HCT116 (cell line): ENCODE measurements at regions of chr1 and their contacts with region 1.

Region 1: GRCh38 chr1:209576798-209577197 is 6.7 kb upstream of the CAMK1G start:
- DNase-seq: peak; percentile 73
- ATAC-seq: peak; percentile 100
- H3K4me3 ChIP-seq: no peak overlapping the region
- H3K27ac ChIP-seq: no peak overlapping the region
- H3K4me1 ChIP-seq: peaks cover 0 to 9% of the 10 kb centered on the region in 2 experiments; a peak in 1 of 4 replicates
- H3K27me3 ChIP-seq: 0 out of 2 replicates have a peak, but pooled peaks cover 16% of the 10 kb centered on the region
- CTCF ChIP-seq: peak; percentile 92 to 96 (median 93)
- POLR2A ChIP-seq: no peak
- RAD21 ChIP-seq: peak; percentile 95

Region 2: DNA sequence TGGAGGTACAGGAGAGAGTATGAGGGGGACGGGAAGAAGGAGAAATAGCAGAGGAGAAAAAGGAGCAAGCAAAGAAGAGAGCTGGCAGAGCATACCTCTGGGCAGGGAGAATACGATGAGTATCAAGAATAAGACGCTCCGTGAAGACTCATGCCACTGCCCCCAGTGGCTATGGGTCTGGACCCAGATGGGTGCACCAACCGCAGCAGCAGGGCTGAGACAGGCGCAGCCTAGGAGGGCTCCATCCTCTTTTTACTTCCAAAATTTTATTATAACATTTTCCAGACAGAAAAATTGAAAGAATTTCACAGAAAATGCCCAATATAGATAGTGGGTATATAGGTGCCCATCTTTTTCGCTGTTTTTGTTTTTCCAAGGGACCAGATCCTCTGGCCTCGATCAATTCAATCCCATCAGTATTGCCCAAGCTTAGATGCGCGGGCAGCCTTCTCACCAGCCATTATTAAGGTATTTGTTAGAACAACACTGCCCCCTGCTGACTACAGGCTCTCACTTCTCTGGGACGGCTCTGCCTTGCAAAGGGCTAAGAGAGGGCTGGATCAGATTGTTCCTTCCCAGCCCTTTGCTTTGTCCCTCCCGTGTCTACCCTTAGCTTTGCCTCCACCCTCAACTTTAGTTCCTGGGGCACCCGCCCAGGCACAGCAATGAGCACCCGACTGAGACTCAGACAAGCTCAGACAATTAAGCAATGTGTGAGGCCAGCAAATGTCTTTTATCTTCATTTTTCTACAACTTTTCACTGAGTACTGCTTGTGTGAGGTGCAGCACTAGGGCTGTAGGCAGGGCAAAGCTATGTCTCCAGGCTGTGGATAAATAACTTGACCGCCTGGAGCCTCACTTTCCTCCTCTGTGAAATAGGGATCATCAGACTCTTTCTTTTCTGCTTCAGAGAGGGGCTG is 10.8 kb before region 1 on chr1:
- CTCF ChIA-PET with region 1: interaction called, 22 read pairs
- POLR2A ChIA-PET with region 1: no interaction called
- RAD21 ChIA-PET with region 1: no interaction called
- intact Hi-C with region 1: no loop called
- DNase-seq: peak; percentile 78
- ATAC-seq: peak; percentile 96
- H3K4me3 ChIP-seq: no peak overlapping the region
- H3K27ac ChIP-seq: no peak overlapping the region
- H3K4me1 ChIP-seq: peaks cover 0 to 6% of the 10 kb centered on the region in 2 experiments; a peak in 1 of 4 replicates
- H3K27me3 ChIP-seq: peaks cover 10% of the 10 kb centered on the region; the same call in 1 of the 2 replicates
- CTCF ChIP-seq: peak; percentile 74 to 84 (median 83); a peak in 5 of 6 replicates
- POLR2A ChIP-seq: no peak
- RAD21 ChIP-seq: peak; percentile 83

Region 3: DNA sequence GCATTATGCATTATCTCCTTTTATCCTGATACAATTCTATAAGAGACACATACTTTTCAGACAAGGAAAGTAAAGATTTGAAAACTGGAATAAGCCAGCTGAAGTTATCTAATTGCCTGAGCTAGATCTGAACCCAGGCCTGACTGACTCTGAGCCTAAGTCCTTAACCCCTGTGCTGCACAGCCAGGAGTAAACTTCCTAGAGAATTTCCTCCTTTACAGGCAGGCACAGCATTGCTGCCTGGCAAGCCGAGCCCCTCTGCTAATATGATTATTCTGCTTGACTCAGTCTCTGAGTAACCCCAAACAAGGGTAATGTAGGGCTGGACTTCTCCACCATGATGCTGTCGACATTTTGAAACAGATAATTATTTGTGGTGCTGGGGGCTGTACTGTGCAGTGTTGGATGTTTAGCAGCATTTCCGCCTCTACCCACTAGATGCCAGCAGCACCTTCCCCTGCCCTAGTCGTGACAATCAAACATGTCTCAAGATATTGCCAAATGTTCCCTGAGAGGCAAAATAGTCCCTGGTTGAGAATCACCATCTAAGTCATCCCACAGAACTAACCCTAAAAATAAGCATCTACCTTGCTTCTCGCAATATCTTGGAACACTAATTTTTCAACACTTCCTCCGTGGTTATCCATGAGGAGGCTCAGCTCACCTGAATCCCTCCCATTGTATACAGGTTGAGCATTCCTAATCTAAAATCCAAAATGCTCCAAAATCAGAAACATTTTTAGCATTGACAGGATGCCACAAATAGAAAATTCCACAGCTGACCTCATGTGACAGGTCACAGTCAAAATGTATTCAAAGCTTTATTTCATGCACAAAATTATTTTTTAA is 25.2 kb after region 1 on chr1:
- CTCF ChIA-PET with region 1: interaction called, 4 read pairs
- POLR2A ChIA-PET with region 1: no interaction called
- RAD21 ChIA-PET with region 1: no interaction called
- intact Hi-C with region 1: loop called (anchors 1 kb)
- DNase-seq: peak; percentile 52
- ATAC-seq: peak; percentile 100
- H3K4me3 ChIP-seq: no peak overlapping the region
- H3K27ac ChIP-seq: no peak overlapping the region
- H3K4me1 ChIP-seq: 0 out of 4 replicates have a peak, but pooled peaks cover 0 to 6% of the 10 kb centered on the region in 2 experiments
- H3K27me3 ChIP-seq: no peaks in the 10 kb centered on the region
- CTCF ChIP-seq: peak; percentile 79 to 93 (median 83)
- POLR2A ChIP-seq: no peak
- RAD21 ChIP-seq: peak; percentile 94

Region 4: DNA sequence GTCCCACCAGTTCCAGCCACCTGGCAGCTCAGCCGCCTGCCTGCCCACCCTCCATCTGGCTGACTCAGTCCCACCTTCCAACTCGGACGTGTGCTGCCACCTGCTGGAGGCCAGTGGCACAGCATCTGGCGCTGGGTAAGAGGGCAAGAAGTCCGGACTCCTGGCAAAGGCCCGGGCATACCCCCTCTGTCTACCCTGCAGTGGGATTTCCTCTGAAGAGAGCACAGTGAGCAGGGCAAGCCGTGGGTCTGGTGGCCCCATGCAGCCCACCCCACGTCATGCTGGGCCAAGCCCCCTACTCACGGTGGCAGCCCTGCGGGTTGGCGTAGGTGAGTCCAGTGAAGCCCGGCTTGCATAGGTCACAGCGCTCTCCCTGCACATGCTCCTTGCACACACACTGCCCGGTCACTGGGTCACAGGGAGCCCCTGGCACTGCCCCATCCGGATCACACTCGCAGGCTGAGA is 51.0 kb after region 1 on chr1:
- CTCF ChIA-PET with region 1: interaction called, 5 read pairs
- POLR2A ChIA-PET with region 1: no interaction called
- RAD21 ChIA-PET with region 1: no interaction called
- intact Hi-C with region 1: loop called (anchors 1 kb)
- DNase-seq: peak; percentile 35
- ATAC-seq: peak; percentile 96
- H3K4me3 ChIP-seq: no peak overlapping the region
- H3K27ac ChIP-seq: no peak overlapping the region
- H3K4me1 ChIP-seq: peaks cover 0 to 7% of the 10 kb centered on the region in 2 experiments; a peak in 2 of 4 replicates
- H3K27me3 ChIP-seq: no peaks in the 10 kb centered on the region
- CTCF ChIP-seq: peak; percentile 79 to 94 (median 91)
- POLR2A ChIP-seq: no peak
- RAD21 ChIP-seq: peak; percentile 84

Region 5: DNA sequence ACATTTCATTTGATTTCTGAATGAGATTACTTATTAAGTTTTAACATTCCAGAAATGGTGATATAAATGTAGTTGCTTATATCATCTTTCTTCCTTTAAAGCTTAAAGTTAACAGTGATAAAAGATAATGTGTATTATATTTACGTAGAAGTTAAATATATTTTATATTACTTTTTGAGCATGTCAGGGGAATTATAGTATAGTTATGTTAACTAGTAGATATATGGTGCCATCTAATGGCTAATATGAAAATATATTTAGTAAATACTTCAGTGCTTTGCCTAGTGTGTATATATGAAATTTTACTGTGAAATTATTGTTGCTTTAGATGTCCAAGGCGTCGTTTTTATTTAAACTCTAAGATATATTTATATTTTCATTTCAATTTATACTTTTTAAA is 412.7 kb after region 1 on chr1:
- CTCF ChIA-PET with region 1: no interaction called
- POLR2A ChIA-PET with region 1: no interaction called
- RAD21 ChIA-PET with region 1: no interaction called
- intact Hi-C with region 1: loop called (anchors 5 kb)
- DNase-seq: no peak
- ATAC-seq: peak; percentile 76
- H3K4me3 ChIP-seq: no peak overlapping the region
- H3K27ac ChIP-seq: no peak overlapping the region
- H3K4me1 ChIP-seq: no peaks in the 10 kb centered on the region
- H3K27me3 ChIP-seq: peaks cover 29% of the 10 kb centered on the region
- CTCF ChIP-seq: peak in 1 of 3 experiments; percentile 57; a peak in 2 of 6 replicates
- POLR2A ChIP-seq: no peak
- RAD21 ChIP-seq: peak; percentile 63